ENCODE measurements at regions of chr18 and their contacts with region 1.

Region 1: GRCh38 chr18:2411381-2411960 is 159.8 kb downstream of the METTL4 start:
- DNase-seq: peak; percentile 54
- H3K4me3 ChIP-seq: no peak overlapping the region
- H3K27ac ChIP-seq: no peak overlapping the region
- H3K4me1 ChIP-seq: peaks cover 5% of the 10 kb centered on the region
- H3K27me3 ChIP-seq: no peaks in the 10 kb centered on the region
- CTCF ChIP-seq: no peak
- POLR2A ChIP-seq: no peak

Region 2: DNA sequence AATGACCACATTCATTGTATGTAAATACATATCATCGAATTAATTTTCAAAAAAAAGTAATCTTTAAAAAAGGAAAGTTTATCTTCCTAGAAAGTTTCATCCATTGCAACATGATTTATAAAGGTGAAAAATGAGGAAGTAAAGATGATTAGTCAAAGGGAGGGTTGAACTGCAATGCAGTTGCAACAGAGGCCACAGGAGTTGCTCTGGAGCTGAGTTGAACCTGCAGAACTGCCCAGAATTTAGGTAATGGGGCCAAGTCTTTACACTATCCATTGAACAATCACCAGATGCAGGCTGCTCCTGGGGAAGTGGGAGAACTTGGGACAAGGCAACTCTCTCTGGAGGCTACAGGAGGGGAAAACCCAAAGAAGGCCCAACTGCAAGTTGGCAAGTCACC is 230.9 kb before region 1 on chr18:
- CTCF ChIA-PET with region 1: no interaction called
- POLR2A ChIA-PET with region 1: no interaction called
- dilution Hi-C with region 1: no loop called
- intact Hi-C with region 1: no loop called
- DNase-seq: no peak
- H3K4me3 ChIP-seq: no peak overlapping the region
- H3K27ac ChIP-seq: no peak overlapping the region
- H3K4me1 ChIP-seq: no peaks in the 10 kb centered on the region
- H3K27me3 ChIP-seq: peaks cover 0 to 3% of the 10 kb centered on the region in 2 experiments
- CTCF ChIP-seq: no peak
- POLR2A ChIP-seq: no peak

Region 3: DNA sequence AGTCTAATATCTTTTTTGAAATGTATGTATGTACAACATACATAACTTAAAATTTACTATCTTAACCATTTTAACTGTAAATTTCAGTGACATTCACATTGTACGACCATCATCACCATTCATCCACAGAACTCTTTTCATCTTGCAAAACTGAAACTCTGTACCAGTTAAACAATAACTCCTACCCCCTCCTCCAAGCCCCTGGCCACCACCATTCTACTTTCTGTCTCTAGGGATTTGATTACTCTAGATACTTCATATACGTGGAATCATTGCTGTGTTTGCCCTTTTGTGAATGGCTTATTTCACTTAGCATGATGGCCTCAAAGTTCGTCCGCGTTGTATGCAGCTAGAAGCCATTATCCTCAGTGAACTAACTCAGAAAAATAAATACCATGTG is 57.2 kb before region 1 on chr18:
- CTCF ChIA-PET with region 1: no interaction called
- POLR2A ChIA-PET with region 1: no interaction called
- dilution Hi-C with region 1: no loop called
- intact Hi-C with region 1: loop called (anchors 10 kb)
- DNase-seq: no peak
- H3K4me3 ChIP-seq: no peak overlapping the region
- H3K27ac ChIP-seq: no peak overlapping the region
- H3K4me1 ChIP-seq: no peaks in the 10 kb centered on the region
- H3K27me3 ChIP-seq: peaks cover 0 to 2% of the 10 kb centered on the region in 2 experiments
- CTCF ChIP-seq: no peak
- POLR2A ChIP-seq: no peak

Region 4: DNA sequence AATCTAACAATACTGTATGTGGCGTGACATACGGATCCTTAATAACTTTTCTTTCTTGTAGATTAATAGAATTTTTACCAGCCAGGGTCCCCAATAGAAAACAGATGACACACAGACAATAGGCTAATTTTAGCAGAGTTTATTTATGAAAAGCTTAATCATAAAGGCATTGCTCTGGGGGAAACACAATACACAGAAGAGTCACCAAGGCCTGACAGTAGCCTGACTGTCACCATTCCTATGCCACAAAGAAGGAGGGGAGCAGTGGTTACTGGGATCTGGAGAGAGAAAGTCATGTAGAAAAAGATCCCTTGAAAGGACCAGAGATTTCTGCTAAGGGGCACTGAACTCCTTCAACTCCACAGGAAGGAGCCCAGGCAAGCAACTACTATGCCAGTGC is 20.3 kb after region 1 on chr18:
- CTCF ChIA-PET with region 1: no interaction called
- POLR2A ChIA-PET with region 1: no interaction called
- dilution Hi-C with region 1: no loop called
- intact Hi-C with region 1: no loop called
- DNase-seq: no peak
- H3K4me3 ChIP-seq: no peak overlapping the region
- H3K27ac ChIP-seq: no peak overlapping the region
- H3K4me1 ChIP-seq: no peaks in the 10 kb centered on the region
- H3K27me3 ChIP-seq: peaks cover 2% of the 10 kb centered on the region in 2 experiments
- CTCF ChIP-seq: no peak
- POLR2A ChIP-seq: no peak

Region 5: GRCh38 chr18:3397071-3397745 is 985.7 kb after region 1 on chr18:
- CTCF ChIA-PET with region 1: no interaction called
- POLR2A ChIA-PET with region 1: no interaction called
- dilution Hi-C with region 1: no loop called
- intact Hi-C with region 1: no loop called
- DNase-seq: no peak
- H3K4me3 ChIP-seq: no peak overlapping the region
- H3K27ac ChIP-seq: no peak overlapping the region
- H3K4me1 ChIP-seq: no peaks in the 10 kb centered on the region
- H3K27me3 ChIP-seq: peaks cover 0 to 2% of the 10 kb centered on the region in 2 experiments
- CTCF ChIP-seq: no peak
- POLR2A ChIP-seq: no peak